ENCODE measurements at regions of chr12 and their contacts with region 1.

Region 1: DNA sequence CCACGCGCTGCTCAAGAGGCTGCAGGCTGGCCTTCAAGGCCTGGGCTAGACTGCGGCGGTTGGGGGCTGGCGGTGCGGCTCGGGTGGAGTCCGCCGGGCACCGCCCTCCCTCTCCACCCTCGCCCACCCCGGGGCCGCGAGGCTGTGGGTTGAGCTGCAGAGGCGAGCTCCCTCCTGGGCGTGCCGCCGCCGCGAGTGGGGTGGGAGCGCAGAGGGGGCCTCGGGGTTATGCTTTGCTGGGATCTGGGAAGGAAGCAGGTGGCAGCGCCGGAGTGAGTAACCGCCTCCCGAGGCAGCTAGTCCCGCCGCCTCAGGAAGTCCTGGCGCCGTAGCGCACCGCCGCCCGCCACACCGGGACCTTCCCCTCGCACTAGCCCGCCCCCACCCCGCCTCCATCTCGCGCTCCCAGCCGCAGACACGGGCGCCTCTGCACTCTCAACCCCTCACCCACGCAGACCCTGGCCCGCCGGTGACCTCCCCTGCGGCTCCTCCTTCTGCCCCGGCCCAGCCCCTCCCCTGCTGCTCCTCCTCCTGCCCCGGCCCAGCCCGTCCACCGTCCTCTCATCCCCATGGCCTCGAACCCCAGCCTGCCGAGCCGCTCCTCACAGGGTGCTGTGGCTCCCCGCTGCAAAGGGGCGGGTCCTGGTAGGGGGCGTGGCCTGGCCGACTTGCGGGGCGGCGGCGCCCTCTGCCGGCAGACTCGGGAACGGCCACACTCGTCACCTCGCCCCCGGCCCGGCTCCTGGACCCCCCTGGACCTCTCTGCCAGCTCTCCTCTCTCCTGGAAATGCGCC is 16.6 kb downstream of the TAMALIN start:
- DNase-seq: no peak
- H3K4me3 ChIP-seq: peak overlapping the region; percentile 67
- H3K27ac ChIP-seq: peak overlapping the region; percentile 11
- H3K27me3 ChIP-seq: no peaks in the 10 kb centered on the region
- CTCF ChIP-seq: peak; percentile 89

Region 2: DNA sequence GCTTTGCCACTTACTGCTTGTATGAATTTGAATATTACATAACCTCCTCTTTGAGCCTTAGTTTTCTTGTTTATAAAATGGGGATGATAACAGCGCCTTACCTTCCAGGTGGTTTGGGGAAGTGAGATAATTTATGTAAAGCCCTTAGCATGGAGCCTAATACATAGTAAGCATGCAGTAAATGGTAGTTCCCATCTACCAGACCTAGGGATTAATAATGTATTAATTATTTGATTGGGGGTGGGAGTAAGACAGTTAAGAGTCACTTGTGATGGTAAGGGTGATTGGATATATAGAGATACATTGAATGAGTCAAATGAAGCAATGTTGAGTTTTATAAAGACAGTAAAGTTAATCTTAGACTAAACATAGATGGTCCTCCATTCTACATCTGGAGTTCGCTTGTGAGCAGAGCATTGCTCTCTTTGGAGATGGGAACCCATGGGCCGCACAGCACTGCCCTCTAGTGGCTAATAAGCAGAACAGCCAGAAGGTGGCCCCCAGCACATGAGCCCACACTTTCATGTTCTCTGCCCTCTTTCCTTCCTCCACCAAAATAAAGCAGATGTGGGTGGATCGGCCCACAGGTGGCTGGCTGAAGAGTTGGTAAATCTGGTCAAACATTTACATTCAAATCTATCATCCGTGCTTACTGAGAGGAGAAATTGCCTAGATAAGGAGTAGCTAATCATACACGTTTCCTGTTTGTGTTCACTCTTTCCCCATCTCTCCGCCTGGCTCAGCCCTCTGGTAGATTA is 43.1 kb before region 1 on chr12:
- CTCF ChIA-PET with region 1: interaction called, 12 read pairs
- POLR2A ChIA-PET with region 1: no interaction called
- DNase-seq: no peak
- H3K4me3 ChIP-seq: no peak overlapping the region
- H3K27ac ChIP-seq: no peak overlapping the region
- H3K27me3 ChIP-seq: no peaks in the 10 kb centered on the region
- CTCF ChIP-seq: peak; percentile 98

Region 3: DNA sequence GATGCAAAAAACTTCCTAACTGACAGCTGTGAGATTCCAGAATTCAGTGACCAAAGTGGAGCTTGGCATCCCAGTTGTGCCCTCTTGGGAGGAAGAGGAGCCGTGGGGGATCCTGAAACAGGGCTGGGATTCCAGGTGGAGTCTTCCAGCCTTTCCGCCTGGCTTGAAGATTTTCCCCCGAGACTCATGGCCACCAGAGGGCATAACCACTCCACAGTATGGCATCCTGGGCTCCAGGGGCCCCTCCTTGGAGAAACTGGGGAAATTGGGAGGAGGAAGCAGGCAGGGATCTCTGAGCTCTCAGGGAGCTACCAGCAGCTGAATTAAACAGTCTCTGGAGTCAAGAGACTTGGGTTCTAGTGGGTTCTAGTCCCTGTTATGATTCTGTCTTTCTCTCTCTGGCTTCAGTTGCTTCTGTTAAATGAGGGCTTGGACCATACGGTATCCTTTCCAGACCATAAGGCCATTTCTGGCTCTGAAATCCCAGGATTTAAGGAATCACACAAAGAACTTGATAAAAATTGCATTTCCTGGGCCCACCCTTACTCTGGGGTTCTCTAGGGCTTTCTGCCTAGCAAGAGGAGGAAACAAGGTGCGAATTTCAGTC is 19.2 kb before region 1 on chr12:
- CTCF ChIA-PET with region 1: interaction called, 599 read pairs
- POLR2A ChIA-PET with region 1: interaction called, 28 read pairs
- DNase-seq: no peak
- H3K4me3 ChIP-seq: no peak overlapping the region
- H3K27ac ChIP-seq: no peak overlapping the region
- H3K27me3 ChIP-seq: peaks cover 6% of the 10 kb centered on the region
- CTCF ChIP-seq: peak; percentile 83

Region 4: DNA sequence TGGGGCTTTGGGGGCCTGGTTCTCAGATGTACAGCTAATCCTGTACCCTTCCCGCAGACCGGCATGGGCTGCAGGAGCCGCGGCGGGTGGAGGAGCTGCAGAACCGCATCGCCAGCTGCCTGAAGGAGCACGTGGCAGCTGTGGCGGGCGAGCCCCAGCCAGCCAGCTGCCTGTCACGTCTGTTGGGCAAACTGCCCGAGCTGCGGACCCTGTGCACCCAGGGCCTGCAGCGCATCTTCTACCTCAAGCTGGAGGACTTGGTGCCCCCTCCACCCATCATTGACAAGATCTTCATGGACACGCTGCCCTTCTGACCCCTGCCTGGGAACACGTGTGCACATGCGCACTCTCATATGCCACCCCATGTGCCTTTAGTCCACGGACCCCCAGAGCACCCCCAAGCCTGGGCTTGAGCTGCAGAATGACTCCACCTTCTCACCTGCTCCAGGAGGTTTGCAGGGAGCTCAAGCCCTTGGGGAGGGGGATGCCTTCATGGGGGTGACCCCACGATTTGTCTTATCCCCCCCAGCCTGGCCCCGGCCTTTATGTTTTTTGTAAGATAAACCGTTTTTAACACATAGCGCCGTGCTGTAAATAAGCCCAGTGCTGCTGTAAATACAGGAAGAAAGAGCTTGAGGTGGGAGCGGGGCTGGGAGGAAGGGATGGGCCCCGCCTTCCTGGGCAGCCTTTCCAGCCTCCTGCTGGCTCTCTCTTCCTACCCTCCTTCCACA is 35.4 kb after region 1 on chr12:
- CTCF ChIA-PET with region 1: interaction called, 624 read pairs
- POLR2A ChIA-PET with region 1: no interaction called
- DNase-seq: no peak
- H3K4me3 ChIP-seq: no peak overlapping the region
- H3K27ac ChIP-seq: no peak overlapping the region
- H3K27me3 ChIP-seq: no peaks in the 10 kb centered on the region
- CTCF ChIP-seq: no peak

Region 5: DNA sequence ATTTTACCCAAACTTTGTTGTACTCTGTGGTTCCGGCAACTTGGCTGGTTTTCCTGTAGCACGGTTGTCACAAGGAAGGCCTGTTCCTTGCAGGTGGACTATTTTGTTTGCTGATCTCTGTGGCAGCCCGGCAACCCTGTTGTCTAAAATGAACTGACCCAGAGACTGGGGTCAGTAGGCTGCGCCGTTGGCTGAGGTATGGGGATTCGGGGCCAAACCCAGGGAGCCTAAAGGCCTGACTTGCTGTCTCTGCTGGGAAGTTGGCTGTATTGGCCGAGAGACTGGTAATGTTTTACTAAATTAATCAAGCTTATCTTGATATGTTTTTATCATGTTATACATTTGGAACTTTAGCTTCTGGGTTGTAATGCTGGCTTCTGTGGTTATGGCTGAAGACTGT is 70.0 kb after region 1 on chr12:
- CTCF ChIA-PET with region 1: interaction called, 624 read pairs
- POLR2A ChIA-PET with region 1: no interaction called
- DNase-seq: no peak
- H3K4me3 ChIP-seq: no peak overlapping the region
- H3K27ac ChIP-seq: no peak overlapping the region
- H3K27me3 ChIP-seq: peaks cover 27% of the 10 kb centered on the region
- CTCF ChIP-seq: no peak

Region 6: DNA sequence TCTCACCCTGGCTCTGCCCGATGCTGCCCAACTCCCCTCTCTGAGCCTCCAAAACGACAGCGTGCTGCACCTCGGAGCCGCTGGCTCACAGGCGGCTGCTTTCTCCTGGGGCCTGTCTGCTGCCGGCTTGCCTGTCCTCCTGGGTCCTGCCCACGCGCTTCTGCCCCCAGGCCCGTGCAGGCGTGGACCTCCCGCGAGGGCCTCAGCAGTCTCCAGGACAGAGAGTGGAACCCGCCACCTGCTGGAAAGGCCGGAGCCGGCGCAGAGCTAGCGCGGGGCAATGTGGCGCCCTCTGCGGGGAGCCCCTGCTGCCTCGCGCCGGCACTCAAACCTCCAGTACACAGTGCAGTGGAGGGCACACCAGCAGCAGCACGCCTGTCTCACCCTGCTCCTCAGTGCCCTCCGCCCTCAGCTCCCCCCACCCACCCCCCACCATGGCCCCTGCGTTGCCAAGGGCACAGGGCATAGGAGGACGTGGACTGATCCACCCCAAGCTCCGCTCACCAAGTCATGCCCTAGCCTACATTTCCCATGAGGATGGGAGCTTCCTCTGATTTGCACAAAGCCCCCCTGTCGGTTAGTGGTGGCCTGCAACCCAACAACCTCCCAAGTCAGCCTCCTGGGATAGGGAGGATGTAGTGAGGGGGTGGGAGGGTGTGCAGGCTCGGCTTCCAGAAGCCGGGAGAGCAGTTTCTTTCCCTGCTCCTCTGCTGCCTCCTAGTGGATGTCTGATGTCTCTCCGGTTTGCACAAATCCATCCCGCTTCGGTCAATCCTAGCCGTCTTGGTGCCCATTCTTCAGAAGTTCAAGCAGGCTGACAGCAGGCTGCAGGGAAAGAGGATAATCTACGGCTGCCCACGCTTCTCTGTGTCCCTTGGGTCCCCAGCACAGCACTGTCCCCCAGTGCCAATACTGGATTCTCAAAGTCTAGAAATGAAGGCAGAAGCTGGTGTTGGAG is 856.3 kb after region 1 on chr12:
- CTCF ChIA-PET with region 1: interaction called, 13 read pairs
- POLR2A ChIA-PET with region 1: interaction called, 4 read pairs
- DNase-seq: no peak
- H3K4me3 ChIP-seq: peak overlapping the region; percentile 35
- H3K27ac ChIP-seq: no peak overlapping the region
- H3K27me3 ChIP-seq: no peaks in the 10 kb centered on the region
- CTCF ChIP-seq: peak; percentile 87

Measured in AG04450 (cell line).